ENCODE measurements at regions of chr1 and their contacts with region 1.

Region 1: GRCh38 chr1:3649342-3650247 is at the start of gene WRAP73:
- DNase-seq: peak; percentile 95
- H3K4me3 ChIP-seq: peak within 1 kb of the TSS; percentile 83 to 98
- H3K27ac ChIP-seq: peak within 1 kb of the TSS in 1 of 2 experiments; percentile 75; a peak in 1 of 4 replicates
- H3K4me1 ChIP-seq: peaks cover 0 to 12% of the 10 kb centered on the region in 2 experiments; a peak in 2 of 4 replicates
- H3K27me3 ChIP-seq: no peaks in the 10 kb centered on the region; the same call in 1 of the 2 replicates
- CTCF ChIP-seq: peak; percentile 21; the same call in 1 of the 2 replicates
- EP300 ChIP-seq: no peak
- RAD21 ChIP-seq: 0 out of 2 replicates have a peak, but pooled peaks have one; percentile 13
- polyA plus RNA-seq, gene WRAP73: 61.9 and 67.8 TPM in 2 replicates

Region 2: GRCh38 chr1:3631330-3632262 is 18.0 kb before region 1 on chr1:
- CTCF ChIA-PET with region 1: interaction called, 12 read pairs
- POLR2A ChIA-PET with region 1: interaction called, 4 read pairs
- DNase-seq: no peak
- H3K4me3 ChIP-seq: no peak overlapping the region
- H3K27ac ChIP-seq: no peak overlapping the region; a peak in 1 of 4 replicates
- H3K4me1 ChIP-seq: peaks cover 0 to 19% of the 10 kb centered on the region in 2 experiments; a peak in 2 of 4 replicates
- H3K27me3 ChIP-seq: no peaks in the 10 kb centered on the region
- CTCF ChIP-seq: no peak
- EP300 ChIP-seq: no peak
- RAD21 ChIP-seq: no peak

Region 3: DNA sequence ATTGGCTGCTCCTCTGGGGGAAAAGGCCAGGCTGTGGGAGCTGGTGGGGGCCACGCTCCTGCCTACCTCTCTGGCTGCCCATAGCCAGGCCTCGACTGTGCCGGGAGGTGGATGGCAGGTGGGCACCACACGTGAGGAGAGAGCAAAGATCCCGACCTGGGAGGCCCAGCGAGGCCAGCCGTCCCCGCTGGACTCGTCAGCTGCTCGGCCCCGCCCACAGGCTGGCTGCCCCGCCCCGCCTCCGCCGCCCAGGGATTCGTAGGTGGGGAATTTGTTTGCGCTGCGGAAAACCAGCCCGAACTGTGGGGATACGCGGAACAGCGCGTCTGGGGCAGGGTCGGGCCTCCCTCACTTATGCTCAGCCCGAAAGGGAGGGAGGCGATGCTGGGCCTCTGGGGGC is 34.4 kb after region 1 on chr1:
- CTCF ChIA-PET with region 1: no interaction called
- POLR2A ChIA-PET with region 1: no interaction called
- DNase-seq: no peak
- H3K4me3 ChIP-seq: no peak overlapping the region
- H3K27ac ChIP-seq: no peak overlapping the region
- H3K4me1 ChIP-seq: no peaks in the 10 kb centered on the region; a peak in 1 of 4 replicates
- H3K27me3 ChIP-seq: no peaks in the 10 kb centered on the region
- CTCF ChIP-seq: no peak
- EP300 ChIP-seq: no peak
- RAD21 ChIP-seq: no peak

Measured in SK-N-SH (cell line).